ENCODE measurements at regions of chr19 and their contacts with region 1.

Region 1: DNA sequence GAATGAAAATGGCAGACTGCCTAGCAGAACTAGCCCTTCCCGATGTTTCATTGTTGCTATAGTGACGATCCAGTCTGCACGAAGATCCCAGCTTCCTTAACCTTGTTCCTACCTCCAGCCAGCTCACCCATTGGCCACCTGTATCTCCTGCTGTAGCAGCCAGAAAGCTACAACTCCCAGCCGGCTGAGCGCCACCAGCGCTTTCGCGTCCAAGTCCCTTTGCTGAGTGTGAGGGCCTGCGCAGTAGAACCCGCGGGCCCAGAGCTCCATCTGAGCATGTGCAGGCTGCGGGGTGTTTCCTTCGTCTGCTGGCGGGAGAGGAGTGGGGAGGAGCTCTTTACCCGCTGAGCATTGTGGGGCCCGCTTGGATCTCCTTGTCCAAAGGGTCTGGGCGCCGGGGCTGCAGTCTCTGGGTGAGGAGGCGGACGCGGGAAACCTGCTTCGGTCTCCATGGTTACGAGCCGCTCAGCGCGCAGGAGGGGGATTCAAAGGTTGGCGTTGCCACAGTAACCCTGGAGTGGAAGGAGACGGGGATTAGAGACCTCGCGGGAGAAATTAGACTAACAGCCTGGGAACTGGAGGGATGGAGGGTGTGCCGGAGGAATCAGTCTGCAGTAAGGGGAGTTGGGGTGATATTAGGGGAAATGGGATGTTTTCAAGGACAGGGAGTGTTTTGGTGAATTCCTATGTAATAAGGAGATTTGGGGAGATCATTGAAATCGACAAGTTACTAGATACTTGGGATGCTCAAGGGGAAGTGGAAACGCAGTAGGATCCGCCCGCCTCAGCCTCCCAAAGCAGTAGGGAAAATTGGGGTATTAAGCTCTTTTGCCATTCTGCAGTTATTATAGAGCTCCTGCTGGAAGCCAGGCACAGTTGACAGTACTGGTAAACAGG is 33.5 kb downstream of the ZSWIM9 start:
- DNase-seq: peak; percentile 73 to 90 (median 89)
- ATAC-seq: peak; percentile 100
- H3K4me3 ChIP-seq: peak overlapping the region; percentile 73
- H3K4me3 Mint-ChIP-seq: no peak overlapping the region
- H3K27ac ChIP-seq: peak overlapping the region; percentile 81
- H3K27ac Mint-ChIP-seq: no peak overlapping the region
- H3K4me1 ChIP-seq: peaks cover 8 to 19% of the 10 kb centered on the region in 2 donors
- H3K4me1 Mint-ChIP-seq: peaks cover 4 to 34% (median 18%) of the 10 kb centered on the region in 7 donors
- H3K27me3 ChIP-seq: no peaks in the 10 kb centered on the region
- H3K27me3 Mint-ChIP-seq: no peaks in the 10 kb centered on the region

Region 2: DNA sequence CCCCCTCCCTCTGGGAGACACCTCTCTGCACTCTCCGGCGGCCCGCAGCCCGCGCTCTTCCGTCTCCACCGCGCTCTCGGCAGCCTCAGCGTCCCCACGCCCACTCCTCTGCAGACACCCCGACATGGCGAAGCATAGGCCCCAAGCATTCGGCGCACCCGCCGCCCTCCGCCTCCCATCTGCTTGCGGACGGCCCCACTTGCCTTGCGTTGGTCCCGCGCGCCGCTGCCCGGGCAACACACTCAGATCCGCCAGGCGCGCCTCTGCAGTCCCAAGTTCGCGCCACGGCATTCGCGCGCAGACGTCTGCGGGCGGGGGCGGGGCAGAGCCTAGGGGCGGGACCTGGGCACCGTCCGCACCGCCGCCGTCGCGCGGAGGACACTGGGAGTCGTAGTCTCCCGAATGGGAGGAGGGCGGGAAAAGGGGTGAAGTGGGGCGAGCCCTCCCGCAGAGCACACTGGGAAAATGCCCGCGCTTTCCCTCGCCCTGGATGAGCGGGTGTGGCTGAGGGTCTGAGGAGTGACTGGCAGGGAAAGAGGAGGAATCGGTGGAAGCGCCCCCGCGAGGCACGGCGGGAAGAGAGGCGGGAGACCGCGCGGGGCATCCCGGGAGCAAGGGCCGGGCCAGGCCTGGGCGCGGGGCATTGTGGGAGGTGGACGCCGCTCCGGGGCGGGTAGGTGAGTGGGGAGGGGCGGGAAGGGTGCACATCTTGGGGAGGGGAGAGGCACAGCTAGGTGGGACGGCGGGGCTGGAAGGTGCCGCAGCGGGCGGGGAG is 33.8 kb before region 1 on chr19 and contains the starts of genes LIG1 and ZSWIM9:
- CTCF ChIA-PET with region 1: no interaction called
- POLR2A ChIA-PET with region 1: interaction called, 6 read pairs
- intact Hi-C with region 1: loop called (anchors 1 kb)
- DNase-seq: peak; percentile 87 to 96 (median 94)
- ATAC-seq: peak; percentile 89
- H3K4me3 ChIP-seq: peak within 1 kb of the TSS; percentile 98
- H3K4me3 Mint-ChIP-seq: peak within 1 kb of the TSS; percentile 90 to 100 (median 97)
- H3K27ac ChIP-seq: peak within 1 kb of the TSS; percentile 94
- H3K27ac Mint-ChIP-seq: peak within 1 kb of the TSS; percentile 92 to 100 (median 97)
- H3K4me1 ChIP-seq: peaks cover 14 to 16% of the 10 kb centered on the region in 2 donors
- H3K4me1 Mint-ChIP-seq: peaks cover 20 to 44% (median 32%) of the 10 kb centered on the region in 7 donors
- H3K27me3 ChIP-seq: no peaks in the 10 kb centered on the region
- H3K27me3 Mint-ChIP-seq: no peaks in the 10 kb centered on the region
- total RNA-seq, gene LIG1: 61.0 to 134 (median 122) TPM
- total RNA-seq, gene ZSWIM9: 5.0 to 11.6 (median 7.4) TPM

Region 3: DNA sequence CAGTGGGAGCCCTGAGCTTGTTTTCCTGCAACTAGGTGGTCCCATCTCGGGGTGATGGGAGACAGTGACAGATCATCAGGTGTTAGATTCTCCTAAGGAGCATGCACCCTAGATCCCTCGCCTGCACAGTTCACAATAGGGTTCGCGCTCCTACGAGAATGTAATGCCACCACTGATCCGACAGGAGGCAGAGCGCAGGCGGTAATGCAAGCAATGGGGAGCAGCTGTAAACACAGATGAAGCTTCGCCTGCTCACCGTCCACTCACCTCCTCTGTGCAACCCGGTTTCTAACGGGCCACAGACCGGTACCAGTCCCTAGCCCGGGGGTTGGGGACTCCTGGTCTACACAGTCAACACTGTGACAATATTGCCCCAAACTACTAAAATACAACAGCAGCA is 13.0 kb after region 1 on chr19:
- CTCF ChIA-PET with region 1: interaction called, 8 read pairs
- POLR2A ChIA-PET with region 1: interaction called, 14 read pairs
- intact Hi-C with region 1: no loop called
- DNase-seq: no peak
- ATAC-seq: no peak
- H3K4me3 ChIP-seq: no peak overlapping the region
- H3K4me3 Mint-ChIP-seq: no peak overlapping the region
- H3K27ac ChIP-seq: no peak overlapping the region
- H3K27ac Mint-ChIP-seq: peak overlapping the region in 1 of 9 donors; percentile 4
- H3K4me1 ChIP-seq: no peaks in the 10 kb centered on the region
- H3K4me1 Mint-ChIP-seq: peaks cover 0 to 28% (median 6%) of the 10 kb centered on the region in 7 donors
- H3K27me3 ChIP-seq: no peaks in the 10 kb centered on the region
- H3K27me3 Mint-ChIP-seq: no peaks in the 10 kb centered on the region

Region 4: DNA sequence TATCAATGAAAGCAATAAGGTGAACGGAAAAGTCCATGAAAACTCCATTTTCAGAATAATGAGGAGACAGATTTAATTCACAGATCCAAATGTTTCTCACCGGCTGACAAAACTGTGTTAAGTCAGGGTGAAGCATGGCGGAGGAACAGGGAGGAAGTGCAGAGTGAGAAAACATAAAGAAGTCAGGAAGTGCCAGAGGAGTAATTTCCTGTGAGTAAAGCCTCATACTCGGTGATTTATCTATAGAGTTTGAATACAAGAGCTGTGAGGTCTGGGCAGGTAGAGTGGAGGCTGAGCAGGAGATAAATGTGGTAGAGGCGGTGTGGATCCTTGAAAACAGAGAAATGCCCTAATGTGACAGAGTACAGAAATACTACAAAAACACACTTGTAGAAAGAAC is 40.3 kb after region 1 on chr19:
- CTCF ChIA-PET with region 1: interaction called, 3 read pairs
- POLR2A ChIA-PET with region 1: interaction called, 19 read pairs
- intact Hi-C with region 1: loop called (anchors 2 kb)
- DNase-seq: peak in 7 of 9 donors; percentile 37 to 61 (median 56)
- ATAC-seq: peak; percentile 95
- H3K4me3 ChIP-seq: peak overlapping the region; percentile 19
- H3K4me3 Mint-ChIP-seq: peak overlapping the region; percentile 75 to 91 (median 79)
- H3K27ac ChIP-seq: peak overlapping the region; percentile 63
- H3K27ac Mint-ChIP-seq: peak overlapping the region; percentile 77 to 93 (median 90)
- H3K4me1 ChIP-seq: peaks cover 25 to 39% of the 10 kb centered on the region in 2 donors
- H3K4me1 Mint-ChIP-seq: peaks cover 37 to 67% (median 52%) of the 10 kb centered on the region in 7 donors
- H3K27me3 ChIP-seq: no peaks in the 10 kb centered on the region
- H3K27me3 Mint-ChIP-seq: no peaks in the 10 kb centered on the region

Region 5: GRCh38 chr19:48249502-48250014 is 45.6 kb after region 1 on chr19:
- CTCF ChIA-PET with region 1: no interaction called
- POLR2A ChIA-PET with region 1: interaction called, 19 read pairs
- intact Hi-C with region 1: loop called (anchors 2 kb)
- DNase-seq: peak in 8 of 9 donors; percentile 71 to 80 (median 78)
- ATAC-seq: peak; percentile 91
- H3K4me3 ChIP-seq: peak overlapping the region; percentile 83
- H3K4me3 Mint-ChIP-seq: peak overlapping the region; percentile 91 to 99 (median 96)
- H3K27ac ChIP-seq: peak overlapping the region; percentile 92
- H3K27ac Mint-ChIP-seq: peak overlapping the region; percentile 90 to 100 (median 98)
- H3K4me1 ChIP-seq: peaks cover 65 to 76% of the 10 kb centered on the region in 2 donors
- H3K4me1 Mint-ChIP-seq: peaks cover 62 to 91% (median 79%) of the 10 kb centered on the region in 7 donors
- H3K27me3 ChIP-seq: no peaks in the 10 kb centered on the region
- H3K27me3 Mint-ChIP-seq: no peaks in the 10 kb centered on the region

Measured in naive thymus-derived CD4-positive, alpha-beta T cell (primary cell).